ENCODE measurements at regions of chr15 and their contacts with region 1.

Region 1: DNA sequence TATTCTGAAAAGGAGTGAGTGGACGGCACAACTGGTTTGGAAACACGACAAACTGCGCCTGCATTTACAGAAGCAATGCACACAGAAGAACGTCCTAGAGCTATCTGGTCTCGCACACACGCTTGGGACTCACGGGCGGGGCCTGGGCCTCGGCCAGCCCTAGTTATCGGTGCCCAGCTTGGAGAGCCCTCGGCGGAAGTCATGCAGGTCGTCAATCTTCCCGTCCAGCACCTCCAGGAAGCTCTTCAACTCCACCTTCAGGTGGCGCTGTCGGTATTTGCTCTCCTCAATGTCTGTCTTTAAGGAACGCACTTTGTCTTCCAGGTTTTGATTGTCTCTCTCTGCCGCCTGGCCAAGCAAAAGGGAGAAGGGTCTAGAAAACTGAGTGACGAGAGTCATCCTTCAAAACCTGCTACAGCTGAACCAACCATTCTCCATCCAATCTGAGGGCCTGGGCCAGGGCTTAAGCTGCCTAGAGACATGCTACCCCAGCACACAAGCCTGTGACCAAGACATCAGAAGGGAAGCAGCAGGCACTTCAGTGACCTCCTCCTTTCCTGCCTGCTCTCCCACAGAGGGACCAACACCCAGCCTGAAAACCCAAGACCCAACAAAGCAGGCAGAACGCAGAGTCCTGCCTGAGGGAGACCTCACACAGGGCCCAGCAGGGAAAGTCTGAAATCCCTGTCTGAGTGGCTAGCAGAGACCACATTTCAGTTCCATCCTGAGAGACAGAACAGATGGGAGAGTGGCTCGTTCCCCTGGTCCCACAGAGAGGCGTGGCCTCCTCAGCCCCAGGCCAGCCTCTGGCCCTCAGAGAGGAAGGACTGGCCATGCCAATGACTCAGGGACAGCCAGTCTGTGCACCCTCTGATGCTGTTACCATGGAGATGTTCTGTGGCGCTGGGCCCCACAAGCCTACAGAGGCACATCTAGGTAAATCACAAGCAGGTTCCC is 40.4 kb downstream of the WHAMM start:
- DNase-seq: peak; percentile 82
- H3K4me3 ChIP-seq: no peak overlapping the region
- H3K27ac ChIP-seq: no peak overlapping the region
- H3K4me1 ChIP-seq: peaks cover 19% of the 10 kb centered on the region
- CTCF ChIP-seq: peak; percentile 87

Region 2: DNA sequence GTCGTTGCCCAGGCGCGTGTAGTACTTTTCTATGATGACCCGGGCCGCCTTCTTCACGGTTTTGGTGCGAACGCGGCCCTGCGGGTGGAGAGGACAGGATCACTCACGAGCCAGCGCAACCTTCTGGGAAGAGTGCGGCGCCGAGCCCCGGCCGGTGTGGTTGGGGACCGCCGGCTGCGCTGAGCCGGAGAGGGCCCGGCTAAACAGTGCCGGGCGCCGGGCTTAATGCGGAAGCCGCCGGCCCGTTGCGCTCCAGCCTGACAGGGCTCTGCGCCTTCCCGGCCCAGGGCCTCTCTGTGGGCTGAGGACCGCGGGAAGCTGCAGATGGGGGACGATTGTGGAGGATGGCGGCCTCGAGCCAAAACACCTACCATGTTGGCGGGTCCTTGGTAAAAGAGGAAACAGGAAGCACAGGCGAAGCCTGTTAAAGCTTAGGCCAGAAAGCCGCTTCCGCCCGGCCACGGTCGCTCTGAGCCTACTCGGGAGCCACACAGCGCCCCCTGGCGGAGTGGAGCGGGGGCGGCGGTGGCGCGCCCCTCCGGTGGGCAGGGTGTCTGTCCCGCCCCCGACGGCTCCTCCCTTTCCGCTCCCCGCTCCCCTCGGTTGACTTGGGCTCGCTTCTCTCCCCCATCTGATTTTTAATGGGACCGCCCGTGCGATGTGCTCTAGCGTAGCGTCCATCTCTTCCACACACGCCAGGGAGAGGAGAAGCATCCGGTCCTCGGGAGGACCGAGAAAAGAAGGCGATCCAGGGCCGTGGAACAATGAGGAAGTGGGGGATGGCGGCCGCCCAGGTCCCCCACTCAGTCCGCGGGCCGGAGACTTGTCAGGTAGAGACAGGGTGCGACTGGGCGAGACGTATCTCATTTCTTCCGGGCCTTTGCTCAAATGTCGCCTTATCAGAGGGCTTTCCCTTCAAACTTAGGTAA is 309.5 kb before region 1 on chr15 and contains the start of gene RPS17:
- CTCF ChIA-PET with region 1: no interaction called
- POLR2A ChIA-PET with region 1: no interaction called
- intact Hi-C with region 1: loop called (anchors 10 kb)
- DNase-seq: peak; percentile 96
- H3K4me3 ChIP-seq: peak within 1 kb of the TSS; percentile 78
- H3K27ac ChIP-seq: peak within 1 kb of the TSS; percentile 66
- H3K4me1 ChIP-seq: peaks cover 29% of the 10 kb centered on the region
- CTCF ChIP-seq: peak; percentile 90
- total RNA-seq, gene RPS17: 3,737 and 4,080 TPM in 2 replicates

Region 3: GRCh38 chr15:82838096-82838735 is 11.6 kb before region 1 on chr15:
- CTCF ChIA-PET with region 1: no interaction called
- POLR2A ChIA-PET with region 1: no interaction called
- intact Hi-C with region 1: no loop called
- DNase-seq: no peak
- H3K4me3 ChIP-seq: no peak overlapping the region
- H3K27ac ChIP-seq: no peak overlapping the region
- H3K4me1 ChIP-seq: no peaks in the 10 kb centered on the region
- CTCF ChIP-seq: no peak

Region 4: GRCh38 chr15:82919231-82919886 is 69.5 kb after region 1 on chr15:
- CTCF ChIA-PET with region 1: no interaction called
- POLR2A ChIA-PET with region 1: no interaction called
- intact Hi-C with region 1: no loop called
- DNase-seq: no peak
- H3K4me3 ChIP-seq: no peak overlapping the region
- H3K27ac ChIP-seq: no peak overlapping the region
- H3K4me1 ChIP-seq: no peaks in the 10 kb centered on the region
- CTCF ChIP-seq: no peak

Region 5: GRCh38 chr15:82985688-82986441 is 136.0 kb after region 1 on chr15 and contains the start of gene RAMAC:
- CTCF ChIA-PET with region 1: no interaction called
- POLR2A ChIA-PET with region 1: no interaction called
- intact Hi-C with region 1: loop called (anchors 5 kb)
- DNase-seq: peak; percentile 98
- H3K4me3 ChIP-seq: peak within 1 kb of the TSS; percentile 95
- H3K27ac ChIP-seq: peak within 1 kb of the TSS; percentile 46
- H3K4me1 ChIP-seq: peaks cover 13% of the 10 kb centered on the region
- CTCF ChIP-seq: no peak
- total RNA-seq, gene RAMAC: 28.1 and 39.0 TPM in 2 replicates

Region 6: GRCh38 chr15:82999905-83000671 is 150.3 kb after region 1 on chr15:
- CTCF ChIA-PET with region 1: interaction called, 5 read pairs
- POLR2A ChIA-PET with region 1: no interaction called
- intact Hi-C with region 1: loop called (anchors 1 kb)
- DNase-seq: peak; percentile 70
- H3K4me3 ChIP-seq: peak overlapping the region; percentile 29
- H3K27ac ChIP-seq: no peak overlapping the region
- H3K4me1 ChIP-seq: peaks cover 8% of the 10 kb centered on the region
- CTCF ChIP-seq: peak; percentile 83

Region 7: GRCh38 chr15:83380682-83381081 is 530.8 kb after region 1 on chr15:
- CTCF ChIA-PET with region 1: no interaction called
- POLR2A ChIA-PET with region 1: no interaction called
- intact Hi-C with region 1: loop called (anchors 5 kb)
- DNase-seq: peak; percentile 51
- H3K4me3 ChIP-seq: no peak overlapping the region
- H3K27ac ChIP-seq: no peak overlapping the region
- H3K4me1 ChIP-seq: no peaks in the 10 kb centered on the region
- CTCF ChIP-seq: peak; percentile 72